Activated CD4-positive, alpha-beta T cell treated with anti-CD3 and anti-CD28 coated beads for 36 hours (primary cell): ENCODE measurements at regions of chr19 and their contacts with region 1.

Region 1: GRCh38 chr19:37655689-37656371 is 565 bp upstream of the ZFP30 start:
- DNase-seq: peak; percentile 93
- ATAC-seq: peak; percentile 79
- H3K4me3 Mint-ChIP-seq: peak overlapping the region; percentile 94
- H3K27ac Mint-ChIP-seq: peak overlapping the region; percentile 99
- H3K4me1 Mint-ChIP-seq: peaks cover 33% of the 10 kb centered on the region
- H3K27me3 Mint-ChIP-seq: no peaks in the 10 kb centered on the region

Region 2: DNA sequence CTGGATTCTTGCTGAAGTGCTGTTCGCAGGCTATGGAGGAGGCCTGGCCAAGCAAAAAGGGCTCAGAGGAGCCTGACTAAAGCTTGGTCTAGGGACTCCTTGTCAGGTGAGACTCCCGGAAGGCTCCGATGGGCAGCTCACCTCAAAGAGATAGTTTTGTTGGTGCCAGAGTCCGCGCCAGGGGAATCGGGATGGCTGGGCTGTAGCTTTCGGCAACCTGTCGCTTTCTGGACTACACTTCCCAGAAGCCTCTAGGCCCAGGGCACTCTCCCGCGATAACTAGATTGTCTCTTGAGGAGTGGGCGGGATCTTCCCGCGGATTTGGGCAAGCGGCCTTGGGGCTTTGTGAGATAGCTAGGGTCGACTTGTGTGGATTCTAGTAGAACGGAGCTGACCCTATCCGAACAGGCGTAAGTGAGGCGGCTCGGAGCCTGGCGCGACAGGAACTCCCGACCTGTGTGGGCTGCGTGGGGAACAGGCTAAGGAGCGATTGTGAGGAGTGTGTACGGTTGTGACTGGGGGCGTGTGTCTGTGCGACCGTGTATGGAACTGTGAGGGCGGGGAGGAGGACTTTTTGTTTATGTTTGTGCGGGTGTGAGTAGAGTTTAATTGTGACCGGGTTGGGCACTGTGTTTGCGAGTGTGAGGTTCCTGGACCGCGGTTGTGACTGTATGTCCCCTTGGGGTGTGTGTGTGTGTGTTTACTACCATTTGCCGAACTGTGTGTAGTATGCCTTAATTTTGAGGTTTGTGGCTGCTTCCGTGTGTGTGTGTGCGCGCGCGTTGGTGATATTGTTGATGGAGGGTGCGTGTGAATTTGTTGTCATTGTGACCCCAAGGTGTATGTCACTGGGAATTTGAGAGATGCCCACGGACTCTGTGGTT is 805.0 kb before region 1 on chr19 and contains the start of gene ZNF345:
- CTCF ChIA-PET with region 1: no interaction called
- POLR2A ChIA-PET with region 1: no interaction called
- intact Hi-C with region 1: loop called in 1 of 2 experiments (anchors 1 kb)
- DNase-seq: peak; percentile 91
- ATAC-seq: peak; percentile 82
- H3K4me3 Mint-ChIP-seq: no peak within 1 kb of the TSS
- H3K27ac Mint-ChIP-seq: no peak within 1 kb of the TSS
- H3K4me1 Mint-ChIP-seq: peaks cover 10% of the 10 kb centered on the region
- H3K27me3 Mint-ChIP-seq: no peaks in the 10 kb centered on the region
- total RNA-seq, gene ZNF345: 3.5 to 4.6 TPM

Region 3: GRCh38 chr19:37506387-37507166 is 149.3 kb before region 1 on chr19 and contains the start of gene ZNF793:
- CTCF ChIA-PET with region 1: no interaction called
- POLR2A ChIA-PET with region 1: no interaction called
- intact Hi-C with region 1: loop called in 1 of 2 experiments (anchors 1 kb)
- DNase-seq: peak; percentile 87
- ATAC-seq: peak; percentile 87
- H3K4me3 Mint-ChIP-seq: no peak within 1 kb of the TSS
- H3K27ac Mint-ChIP-seq: no peak within 1 kb of the TSS
- H3K4me1 Mint-ChIP-seq: no peaks in the 10 kb centered on the region
- H3K27me3 Mint-ChIP-seq: no peaks in the 10 kb centered on the region
- total RNA-seq, gene ZNF793: 4.4 to 4.7 TPM

Region 4: DNA sequence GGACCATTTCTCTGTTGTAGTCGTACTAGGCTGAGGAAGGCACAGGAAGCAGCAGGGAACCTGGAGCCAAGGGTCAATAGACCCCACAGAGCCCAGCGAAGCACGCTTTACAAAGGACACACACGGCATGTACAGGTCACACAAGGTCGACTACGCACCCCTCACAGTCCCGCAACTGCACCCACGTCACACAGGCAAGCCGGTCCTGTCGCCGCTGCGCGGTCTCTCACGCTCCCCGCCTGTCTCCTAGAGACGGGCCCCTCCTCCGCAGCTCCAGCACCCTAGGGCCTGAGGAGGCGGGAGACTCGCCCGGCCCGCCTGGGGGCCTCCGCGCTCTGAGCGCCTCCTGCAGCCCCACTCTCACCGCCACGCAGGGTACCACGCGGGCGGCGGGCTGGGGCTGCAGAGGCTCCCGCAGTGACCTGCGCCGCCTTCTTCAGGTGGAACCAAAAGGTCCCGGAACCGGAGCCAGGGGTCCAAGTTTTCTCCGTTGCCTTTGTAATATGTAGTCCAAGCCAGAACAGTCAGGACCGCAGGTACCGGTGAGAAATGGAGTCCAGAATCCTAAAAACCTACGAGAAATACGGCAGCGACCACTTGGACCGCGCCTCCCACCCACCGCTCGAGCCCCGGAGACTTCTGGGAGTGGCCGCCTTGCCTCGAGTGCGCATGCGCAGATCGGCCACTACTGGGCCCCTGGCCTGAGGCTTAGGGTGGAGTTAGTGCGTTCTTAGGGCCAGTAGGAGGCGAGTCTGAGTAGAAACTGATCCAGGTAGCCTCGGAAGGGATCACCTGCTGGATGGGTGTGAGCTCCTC is 63.5 kb after region 1 on chr19 and contains the start of gene ZNF607:
- CTCF ChIA-PET with region 1: interaction called, 3 read pairs
- POLR2A ChIA-PET with region 1: no interaction called
- intact Hi-C with region 1: loop called (anchors 1 to 2 kb)
- DNase-seq: peak; percentile 94
- ATAC-seq: peak; percentile 96
- H3K4me3 Mint-ChIP-seq: peak within 1 kb of the TSS; percentile 88
- H3K27ac Mint-ChIP-seq: peak within 1 kb of the TSS; percentile 89
- H3K4me1 Mint-ChIP-seq: peaks cover 19% of the 10 kb centered on the region
- H3K27me3 Mint-ChIP-seq: no peaks in the 10 kb centered on the region
- total RNA-seq, gene ZNF607: 4.9 to 8.3 TPM